ENCODE measurements at regions of chr6 and their contacts with region 1.

Region 1: DNA sequence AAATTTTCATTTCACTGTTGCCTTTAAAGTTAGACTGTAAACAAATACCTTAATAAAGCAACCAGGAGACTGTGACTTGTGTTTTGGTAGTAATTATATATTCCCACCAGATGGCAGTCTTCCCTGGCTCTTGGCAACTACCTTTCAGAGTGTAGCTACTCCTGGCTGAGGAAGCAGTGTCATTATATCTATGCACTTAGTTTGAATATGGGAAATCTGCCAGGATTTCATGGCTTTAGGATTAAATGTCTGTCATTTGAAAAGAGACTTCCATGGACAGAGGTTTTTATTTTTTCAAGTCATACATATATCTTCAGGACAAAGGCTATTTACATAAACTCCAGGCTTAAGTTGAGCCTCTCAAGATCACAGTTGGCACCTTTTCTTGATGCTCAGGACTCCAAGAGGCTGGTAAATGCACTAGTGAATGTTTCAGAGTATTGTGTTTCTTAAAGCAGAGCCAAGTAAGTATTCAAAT is 160.1 kb downstream of the C6orf58 start:
- DNase-seq: peak in 1 of 3 donors; percentile 43
- ATAC-seq: peak; percentile 92 to 95 (median 93)
- H3K4me3 ChIP-seq: no peak overlapping the region
- H3K27ac ChIP-seq: no peak overlapping the region
- H3K4me1 ChIP-seq: no peaks in the 10 kb centered on the region
- H3K27me3 ChIP-seq: no peaks in the 10 kb centered on the region
- CTCF ChIP-seq: peak; percentile 63 to 80 (median 76)
- POLR2A ChIP-seq: no peak

Region 2: GRCh38 chr6:128725271-128726233 is 988.5 kb after region 1 on chr6:
- intact Hi-C with region 1: loop called (anchors 10 kb)
- DNase-seq: no peak
- ATAC-seq: peak in 3 of 4 donors; percentile 33 to 40 (median 34)
- H3K4me3 ChIP-seq: no peak overlapping the region
- H3K27ac ChIP-seq: no peak overlapping the region
- H3K4me1 ChIP-seq: no peaks in the 10 kb centered on the region
- H3K27me3 ChIP-seq: no peaks in the 10 kb centered on the region
- CTCF ChIP-seq: peak; percentile 41 to 68 (median 67)
- POLR2A ChIP-seq: no peak

Region 3: DNA sequence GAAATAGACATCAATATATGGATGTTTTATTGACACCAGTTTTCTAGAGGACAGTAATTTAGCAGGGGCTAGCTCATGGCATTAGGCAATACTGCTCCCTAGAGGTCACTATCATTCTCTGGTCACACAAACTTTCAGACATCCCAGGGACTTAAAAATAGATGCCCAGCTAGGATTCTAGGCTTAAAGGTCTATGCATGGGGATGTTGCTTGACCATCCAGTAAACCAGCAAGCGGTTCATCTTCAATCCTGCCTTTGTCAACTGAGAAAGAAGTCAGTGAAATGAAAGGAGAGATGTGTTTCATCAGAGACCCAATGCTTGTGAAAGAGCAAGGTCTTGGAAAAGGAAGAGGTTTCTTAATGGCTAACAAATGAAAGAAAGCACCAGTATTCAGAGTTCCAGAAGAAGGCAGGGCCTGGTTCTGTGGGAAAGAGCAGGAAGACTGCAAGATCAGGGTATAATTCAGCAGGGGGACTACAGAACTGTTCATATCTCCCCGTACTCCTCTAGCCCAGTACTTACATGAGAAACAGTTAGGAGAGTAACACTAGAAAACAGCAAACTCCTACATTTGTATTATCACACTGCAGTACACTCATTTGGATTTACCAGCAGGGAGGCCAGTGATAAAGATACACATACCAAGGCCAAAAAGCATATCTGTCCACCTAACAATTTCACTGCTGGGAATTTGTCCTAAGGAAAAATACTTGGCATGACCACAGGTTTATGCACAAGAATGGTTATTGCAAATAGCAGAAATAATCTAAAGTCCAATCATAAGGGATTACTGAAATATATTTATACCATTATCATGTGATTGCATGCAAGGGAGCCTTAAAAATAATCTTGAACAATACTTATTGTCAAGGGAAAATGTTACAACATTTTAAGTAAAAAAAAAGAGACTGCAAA is 994.5 kb after region 1 on chr6:
- intact Hi-C with region 1: loop called (anchors 10 kb)
- DNase-seq: no peak
- ATAC-seq: peak; percentile 77 to 86 (median 81)
- H3K4me3 ChIP-seq: no peak overlapping the region
- H3K27ac ChIP-seq: no peak overlapping the region
- H3K4me1 ChIP-seq: no peaks in the 10 kb centered on the region
- H3K27me3 ChIP-seq: no peaks in the 10 kb centered on the region
- CTCF ChIP-seq: peak; percentile 46 to 66 (median 57)
- POLR2A ChIP-seq: no peak

Measured in right lobe of liver (tissue), 6 donors.